BJ (cell line): ENCODE measurements at regions of chr11 and their contacts with region 1.

Region 1: DNA sequence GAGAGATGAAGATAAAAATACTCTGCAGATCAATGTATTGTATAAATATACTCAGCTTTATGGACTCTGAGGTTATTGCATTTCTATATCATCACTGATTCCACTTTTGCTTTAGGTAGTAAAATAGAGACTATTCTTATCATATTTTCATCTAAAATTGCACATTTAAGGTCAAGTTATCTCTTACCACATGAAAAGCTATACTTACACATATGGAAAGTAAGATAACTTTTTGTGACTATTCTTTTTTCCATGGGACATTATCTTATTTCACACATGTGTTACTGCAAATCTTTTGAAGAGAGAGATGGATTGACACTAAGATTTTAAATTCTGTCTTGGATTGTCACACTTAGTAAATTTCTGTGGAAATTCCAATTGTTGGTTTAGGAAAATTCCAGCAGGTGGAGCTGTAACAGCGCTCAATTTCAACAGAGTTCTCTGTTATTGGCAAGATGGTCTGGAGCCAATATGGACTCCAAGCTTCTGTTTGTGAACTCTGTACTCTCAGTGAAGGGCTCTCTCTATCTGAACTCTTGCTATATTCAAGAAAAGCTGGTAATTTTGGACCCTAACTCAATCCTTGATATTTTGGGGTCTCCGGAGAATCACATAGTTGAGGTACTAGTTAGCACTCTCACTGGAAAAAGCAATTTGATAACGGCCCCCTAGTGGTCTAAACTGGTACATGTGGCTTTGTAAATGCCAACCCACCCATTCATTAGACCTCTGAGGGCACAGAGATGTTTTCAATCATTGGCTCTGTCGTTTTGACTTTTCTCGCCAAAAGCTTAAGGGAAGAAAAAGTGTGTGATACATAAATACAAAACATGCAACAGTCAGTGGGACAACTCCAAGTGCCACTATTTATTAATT is 429.7 kb downstream of the ETS1 start:
- DNase-seq: peak; percentile 21
- H3K4me3 ChIP-seq: no peak overlapping the region
- H3K27me3 ChIP-seq: peaks cover 2% of the 10 kb centered on the region; the same call in 1 of the 2 replicates
- CTCF ChIP-seq: peak; percentile 80

Region 2: GRCh38 chr11:128026596-128026995 is 131.1 kb before region 1 on chr11:
- CTCF ChIA-PET with region 1: interaction called, 37 read pairs
- POLR2A ChIA-PET with region 1: no interaction called
- DNase-seq: peak; percentile 99
- H3K4me3 ChIP-seq: no peak overlapping the region
- H3K27me3 ChIP-seq: no peaks in the 10 kb centered on the region
- CTCF ChIP-seq: no peak

Region 3: DNA sequence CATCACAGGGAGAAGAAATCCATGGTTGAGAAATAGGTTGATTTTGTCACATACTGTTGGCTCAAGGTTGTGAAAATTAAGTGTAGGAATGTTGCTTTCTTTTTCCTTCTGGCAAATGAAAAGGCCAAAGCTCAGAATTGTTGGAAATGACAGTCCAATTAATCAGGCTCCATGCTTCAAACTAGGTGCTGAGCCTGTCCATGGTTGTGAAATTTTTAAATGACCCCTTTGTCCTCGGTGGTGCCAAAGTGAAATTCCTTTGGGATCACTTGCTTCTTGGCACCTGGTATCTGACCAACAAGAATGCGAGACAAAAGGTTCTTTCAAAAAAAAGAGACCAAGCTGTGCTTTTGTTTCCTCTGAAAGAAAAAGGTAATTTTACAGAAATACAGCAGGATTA is 22.2 kb before region 1 on chr11:
- CTCF ChIA-PET with region 1: interaction called, 18 read pairs
- POLR2A ChIA-PET with region 1: no interaction called
- DNase-seq: no peak
- H3K4me3 ChIP-seq: no peak overlapping the region
- H3K27me3 ChIP-seq: no peaks in the 10 kb centered on the region
- CTCF ChIP-seq: no peak

Region 4: DNA sequence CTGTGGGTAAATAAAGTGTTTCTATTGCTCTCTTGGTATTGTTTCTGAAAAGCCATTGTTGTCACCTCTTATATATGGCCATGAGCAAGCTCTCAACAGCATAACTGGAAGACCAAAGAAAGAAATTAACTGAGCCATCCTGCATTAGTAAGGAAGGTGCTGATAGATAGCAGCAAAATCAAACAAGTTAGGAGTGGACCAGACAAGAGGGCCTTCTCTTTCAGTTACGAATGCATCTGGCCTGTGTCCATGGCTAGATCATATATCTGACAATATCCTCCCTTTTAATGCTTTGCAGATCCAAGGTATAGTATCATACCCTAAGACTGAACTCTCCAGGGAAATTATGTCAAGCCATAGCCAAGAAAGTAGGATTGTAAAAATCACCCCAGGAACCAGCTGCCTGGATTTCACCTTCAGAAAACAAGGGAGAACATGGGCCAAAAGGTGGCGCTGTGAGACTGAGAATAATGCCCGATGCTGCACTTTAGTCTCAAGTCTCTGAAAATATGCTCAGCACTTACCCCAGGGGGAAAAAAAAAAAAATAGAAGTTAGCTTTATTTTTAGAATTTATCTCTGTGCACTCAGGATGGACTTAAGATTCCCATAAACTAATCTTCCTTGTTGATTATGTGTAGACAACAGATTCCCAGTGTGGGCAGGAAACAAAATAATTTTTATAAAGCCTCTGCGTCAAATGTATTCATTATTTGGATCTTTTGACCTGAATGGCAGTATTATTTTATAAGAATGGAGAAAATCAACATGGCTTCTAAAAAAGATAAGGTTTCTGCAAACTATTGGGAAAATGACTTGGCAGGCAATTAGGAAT is 14.6 kb after region 1 on chr11:
- CTCF ChIA-PET with region 1: interaction called, 98 read pairs
- POLR2A ChIA-PET with region 1: interaction called, 3 read pairs
- DNase-seq: peak; percentile 44
- H3K4me3 ChIP-seq: no peak overlapping the region
- H3K27me3 ChIP-seq: no peaks in the 10 kb centered on the region
- CTCF ChIP-seq: peak; percentile 78

Region 5: GRCh38 chr11:128437137-128437536 is 279.5 kb after region 1 on chr11:
- CTCF ChIA-PET with region 1: no interaction called
- POLR2A ChIA-PET with region 1: no interaction called
- DNase-seq: no peak
- H3K4me3 ChIP-seq: no peak overlapping the region
- H3K27me3 ChIP-seq: no peaks in the 10 kb centered on the region
- CTCF ChIP-seq: no peak

Region 6: DNA sequence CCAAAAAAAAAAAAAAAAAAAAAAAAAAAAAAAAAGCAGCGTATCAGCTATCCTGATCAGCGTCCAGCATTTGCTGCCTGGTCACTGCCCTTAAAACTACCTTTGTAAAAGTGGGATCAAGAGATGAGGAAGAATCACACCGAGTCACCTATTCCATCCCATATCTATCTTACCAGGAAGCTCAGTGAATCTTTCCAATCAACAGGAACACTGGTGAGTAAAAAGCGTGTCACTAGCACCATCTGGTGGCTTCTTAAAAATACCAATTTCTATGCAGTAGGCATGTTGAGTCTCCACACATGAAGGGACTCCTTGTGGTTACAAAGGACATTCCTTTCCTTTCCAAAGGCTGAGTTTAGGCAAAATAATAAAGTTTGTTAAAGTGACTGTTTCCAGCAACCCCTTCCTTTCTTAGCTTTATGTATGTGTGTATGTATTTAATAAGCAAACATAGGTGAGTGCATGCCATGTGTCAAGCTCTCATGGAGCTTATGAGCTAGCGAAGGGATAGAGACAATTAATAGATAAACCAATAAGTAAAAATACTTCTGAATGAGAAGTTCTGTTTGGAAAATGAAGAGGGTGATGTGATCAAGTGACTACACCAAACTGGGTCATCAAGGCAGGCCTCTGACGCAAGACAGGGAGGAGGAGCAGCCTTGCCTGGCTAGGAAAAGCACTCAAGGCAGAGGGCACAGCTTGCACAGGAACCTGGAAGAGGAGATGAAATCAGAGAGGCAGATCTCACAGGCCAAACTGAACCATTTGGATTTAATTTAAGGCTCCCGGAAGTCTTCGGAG is 798.9 kb after region 1 on chr11:
- CTCF ChIA-PET with region 1: interaction called, 17 read pairs
- POLR2A ChIA-PET with region 1: no interaction called
- DNase-seq: peak; percentile 26
- H3K4me3 ChIP-seq: no peak overlapping the region
- H3K27me3 ChIP-seq: peaks cover 1% of the 10 kb centered on the region
- CTCF ChIP-seq: peak; percentile 65